Endothelial cell of umbilical vein (primary cell): ENCODE measurements at regions of chr3 and their contacts with region 1.

Region 1: GRCh38 chr3:175222356-175222755 is 363.2 kb downstream of the NAALADL2 start:
- DNase-seq: peak; percentile 86
- H3K4me3 ChIP-seq: no peak overlapping the region
- H3K27ac ChIP-seq: no peak overlapping the region
- H3K4me1 ChIP-seq: peaks cover 8% of the 10 kb centered on the region
- H3K27me3 ChIP-seq: no peaks in the 10 kb centered on the region
- CTCF ChIP-seq: no peak
- POLR2A ChIP-seq: no peak

Region 2: GRCh38 chr3:175185903-175186302 is 36.5 kb before region 1 on chr3:
- CTCF ChIA-PET with region 1: no interaction called
- POLR2A ChIA-PET with region 1: no interaction called
- dilution Hi-C with region 1: no loop called
- intact Hi-C with region 1: no loop called
- DNase-seq: no peak
- H3K4me3 ChIP-seq: no peak overlapping the region
- H3K27ac ChIP-seq: no peak overlapping the region
- H3K4me1 ChIP-seq: peaks cover 3% of the 10 kb centered on the region
- H3K27me3 ChIP-seq: no peaks in the 10 kb centered on the region
- CTCF ChIP-seq: no peak
- POLR2A ChIP-seq: no peak

Region 3: GRCh38 chr3:175255698-175256097 is 33.3 kb after region 1 on chr3:
- CTCF ChIA-PET with region 1: no interaction called
- POLR2A ChIA-PET with region 1: no interaction called
- dilution Hi-C with region 1: no loop called
- intact Hi-C with region 1: loop called (anchors 2 kb)
- DNase-seq: no peak
- H3K4me3 ChIP-seq: no peak overlapping the region
- H3K27ac ChIP-seq: no peak overlapping the region
- H3K4me1 ChIP-seq: no peaks in the 10 kb centered on the region
- H3K27me3 ChIP-seq: no peaks in the 10 kb centered on the region
- CTCF ChIP-seq: no peak
- POLR2A ChIP-seq: no peak